ENCODE measurements at regions of chr1 and their contacts with region 1.

Region 1: DNA sequence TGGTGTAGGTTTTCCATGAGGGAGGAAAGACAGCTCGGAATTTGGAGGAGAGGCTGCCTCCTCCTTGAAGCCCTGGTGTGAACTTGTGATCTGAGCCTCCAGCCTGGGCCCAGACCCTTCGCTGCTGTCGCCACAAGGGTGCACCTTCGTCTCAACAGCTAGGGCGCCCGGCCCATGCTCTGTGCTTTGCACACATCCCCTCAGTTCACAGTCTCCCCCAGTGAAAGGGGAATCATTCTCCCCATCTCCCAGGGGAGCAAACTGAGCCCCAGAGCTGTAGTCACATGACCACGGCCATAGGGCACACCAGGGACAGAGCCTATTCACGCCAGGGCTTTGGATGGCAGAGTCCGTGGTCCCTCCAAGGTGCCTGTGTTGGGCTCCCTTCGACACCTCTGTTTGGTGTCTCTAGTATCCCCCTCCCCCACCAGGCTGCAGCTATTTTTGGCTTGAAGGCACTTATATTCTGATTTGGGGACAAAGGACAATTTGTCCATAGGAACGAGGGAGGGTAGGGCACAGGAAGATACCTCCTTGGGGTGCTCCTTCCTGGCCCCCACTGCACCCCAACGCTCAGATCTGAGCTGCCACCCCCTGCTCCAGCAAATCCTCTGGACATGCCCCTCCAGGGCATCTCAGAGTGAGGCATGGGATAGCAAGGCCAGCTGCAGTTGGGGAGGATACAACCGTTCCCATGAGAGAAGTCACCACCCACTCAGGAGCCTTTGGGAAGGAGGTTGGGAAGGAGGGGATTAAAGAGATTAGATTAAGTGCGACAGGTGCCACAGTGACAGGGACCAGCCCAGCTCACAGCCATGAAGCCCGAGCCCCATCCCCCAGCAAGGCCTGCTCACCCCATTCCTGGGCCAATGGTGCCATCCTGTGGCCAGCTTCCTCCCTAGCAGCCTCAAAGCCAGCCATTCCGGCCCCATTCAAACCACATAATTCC is 15.7 kb downstream of the MATN1 start:
- DNase-seq: no peak
- H3K4me3 ChIP-seq: no peak overlapping the region
- H3K27me3 ChIP-seq: peaks cover 13% of the 10 kb centered on the region
- CTCF ChIP-seq: peak; percentile 90

Region 2: DNA sequence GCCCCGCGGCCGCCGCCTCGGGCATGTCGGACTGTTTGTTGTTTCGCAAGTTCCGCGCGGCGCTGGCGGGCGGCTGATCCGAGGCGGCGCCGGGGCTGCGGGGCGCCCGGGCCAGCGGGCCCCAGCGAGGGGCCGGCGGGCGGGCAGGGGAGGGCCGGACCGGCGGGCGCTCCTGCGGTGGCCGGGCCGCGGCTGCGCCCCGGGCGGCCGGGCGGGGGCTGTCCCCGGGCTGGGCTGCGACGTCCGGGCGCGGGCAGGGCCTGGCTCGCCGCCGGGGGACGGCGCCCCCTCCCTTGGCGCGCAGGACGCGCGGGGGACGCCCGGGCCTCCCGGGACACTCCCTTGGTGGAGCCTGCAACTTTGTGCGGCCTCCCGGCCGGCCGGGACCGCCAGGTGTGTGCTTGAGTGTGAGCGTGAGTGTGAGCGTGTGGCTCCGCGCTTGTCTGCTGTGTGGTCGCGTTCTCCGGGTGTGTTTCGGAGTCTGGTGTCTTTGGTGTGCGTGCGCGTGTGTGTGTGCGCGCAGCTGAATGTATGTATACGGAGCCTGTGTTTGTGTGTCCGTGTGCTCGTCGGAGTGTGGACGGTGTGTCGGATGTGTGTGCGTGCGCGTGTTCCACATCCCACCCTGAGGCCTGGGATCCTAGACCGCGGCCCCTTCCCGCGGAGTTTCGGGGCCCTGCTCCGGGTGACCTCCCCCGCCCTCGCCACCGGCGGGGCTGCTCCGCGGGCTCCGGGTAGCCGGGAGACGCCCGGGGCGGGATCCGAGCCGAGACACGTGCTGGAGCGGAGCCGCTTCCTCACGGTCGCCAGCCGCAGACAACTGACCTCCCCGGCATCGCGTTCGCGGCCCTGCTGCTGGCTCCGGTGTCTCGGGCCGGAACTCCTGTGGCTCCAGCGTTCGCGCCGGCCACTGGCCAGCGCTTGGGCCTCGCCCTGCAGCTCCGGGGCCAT is 1469.7 kb before region 1 on chr1:
- CTCF ChIA-PET with region 1: interaction called, 11 read pairs
- POLR2A ChIA-PET with region 1: no interaction called
- DNase-seq: no peak
- H3K4me3 ChIP-seq: peak overlapping the region; percentile 60
- H3K27me3 ChIP-seq: no peaks in the 10 kb centered on the region
- CTCF ChIP-seq: no peak

Region 3: GRCh38 chr1:29368936-29369932 is 1338.5 kb before region 1 on chr1:
- CTCF ChIA-PET with region 1: no interaction called
- POLR2A ChIA-PET with region 1: no interaction called
- DNase-seq: no peak
- H3K4me3 ChIP-seq: no peak overlapping the region
- H3K27me3 ChIP-seq: no peaks in the 10 kb centered on the region
- CTCF ChIP-seq: no peak

Region 4: DNA sequence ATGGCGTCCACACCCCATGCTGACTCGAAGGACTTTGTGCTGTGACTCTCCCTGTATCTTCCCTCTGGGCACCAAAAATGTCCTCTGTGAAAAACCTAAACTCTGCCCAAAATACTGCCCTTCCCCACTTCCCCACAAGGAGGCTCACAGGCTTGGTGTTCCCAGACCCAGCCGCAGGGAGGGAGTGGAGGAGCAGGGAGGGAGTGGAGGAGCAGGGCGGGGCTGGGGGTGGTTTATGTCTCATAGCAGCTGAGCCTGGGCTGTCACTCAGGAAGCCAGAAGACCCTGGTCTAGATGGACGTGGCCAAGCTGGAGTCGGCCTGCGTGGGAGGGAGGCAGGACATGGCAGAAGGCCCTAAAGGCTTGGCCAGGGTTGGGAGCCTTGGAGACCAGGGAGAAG is 1009.7 kb before region 1 on chr1:
- CTCF ChIA-PET with region 1: interaction called, 10 read pairs
- POLR2A ChIA-PET with region 1: no interaction called
- DNase-seq: no peak
- H3K4me3 ChIP-seq: no peak overlapping the region
- H3K27me3 ChIP-seq: no peaks in the 10 kb centered on the region
- CTCF ChIP-seq: peak; percentile 86

Region 5: GRCh38 chr1:30353637-30354036 is 354.0 kb before region 1 on chr1:
- CTCF ChIA-PET with region 1: interaction called, 12 read pairs
- POLR2A ChIA-PET with region 1: no interaction called
- DNase-seq: no peak
- H3K4me3 ChIP-seq: no peak overlapping the region
- H3K27me3 ChIP-seq: no peaks in the 10 kb centered on the region
- CTCF ChIP-seq: peak; percentile 53

Region 6: DNA sequence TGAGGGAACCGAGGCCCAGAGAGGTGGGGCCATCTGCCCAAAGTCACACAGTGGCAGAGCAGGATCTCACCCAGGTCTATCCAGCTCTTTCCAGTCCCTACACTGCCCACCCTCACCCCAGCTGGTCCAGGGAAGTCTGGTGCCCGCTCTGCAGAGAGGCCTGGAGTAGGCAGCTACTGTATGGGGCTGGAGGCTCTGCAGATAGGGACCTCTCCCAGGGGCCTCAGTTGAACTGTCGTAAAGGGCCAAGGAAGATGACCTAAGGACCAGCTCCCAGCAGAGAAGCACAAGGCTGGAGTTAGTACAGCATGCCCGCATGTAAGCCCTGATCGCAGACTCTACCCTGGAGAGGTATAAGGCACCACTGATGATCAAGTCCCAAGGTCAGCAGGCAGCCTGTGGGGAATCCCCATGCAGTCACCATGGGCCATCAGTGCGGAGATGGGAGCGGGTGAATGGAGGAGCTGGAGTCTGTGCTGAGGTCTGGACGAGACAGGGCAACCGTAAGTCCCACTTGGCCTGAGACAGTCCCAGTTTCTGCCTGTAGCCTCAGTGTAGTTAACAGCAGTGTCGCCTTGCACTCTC is 304.5 kb before region 1 on chr1:
- CTCF ChIA-PET with region 1: no interaction called
- POLR2A ChIA-PET with region 1: no interaction called
- DNase-seq: no peak
- H3K4me3 ChIP-seq: no peak overlapping the region
- H3K27me3 ChIP-seq: peaks cover 4% of the 10 kb centered on the region
- CTCF ChIP-seq: no peak

Region 7: DNA sequence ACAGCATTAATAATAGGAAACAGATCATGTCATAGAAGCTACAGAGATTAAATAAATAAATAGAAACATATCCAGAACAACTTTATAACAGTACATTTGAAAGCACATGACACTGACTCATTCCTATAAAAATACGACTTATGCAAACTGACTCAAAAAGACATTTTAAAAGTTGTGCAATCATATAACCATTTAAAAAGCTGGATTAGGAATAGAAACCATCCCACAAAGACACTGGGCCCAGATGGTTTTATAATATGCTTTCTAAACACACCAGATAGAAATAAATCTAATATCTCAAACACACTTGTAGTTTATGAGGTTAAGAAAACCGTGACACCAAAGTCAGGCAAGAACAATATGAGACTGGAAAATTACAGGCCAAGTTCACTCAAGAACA is 31.9 kb before region 1 on chr1:
- CTCF ChIA-PET with region 1: interaction called, 11 read pairs
- POLR2A ChIA-PET with region 1: no interaction called
- DNase-seq: peak; percentile 98
- H3K4me3 ChIP-seq: no peak overlapping the region
- H3K27me3 ChIP-seq: no peaks in the 10 kb centered on the region; the same call in 1 of the 2 replicates
- CTCF ChIP-seq: no peak